ENCODE measurements at regions of chr4 and their contacts with region 1.

Region 1: GRCh38 chr4:184335520-184335919 is 117.8 kb upstream of the ENPP6 start:
- DNase-seq: no peak
- H3K4me3 ChIP-seq: no peak overlapping the region
- H3K27ac ChIP-seq: no peak overlapping the region
- H3K4me1 ChIP-seq: peaks cover 19% of the 10 kb centered on the region
- H3K27me3 ChIP-seq: no peaks in the 10 kb centered on the region
- CTCF ChIP-seq: no peak

Region 2: DNA sequence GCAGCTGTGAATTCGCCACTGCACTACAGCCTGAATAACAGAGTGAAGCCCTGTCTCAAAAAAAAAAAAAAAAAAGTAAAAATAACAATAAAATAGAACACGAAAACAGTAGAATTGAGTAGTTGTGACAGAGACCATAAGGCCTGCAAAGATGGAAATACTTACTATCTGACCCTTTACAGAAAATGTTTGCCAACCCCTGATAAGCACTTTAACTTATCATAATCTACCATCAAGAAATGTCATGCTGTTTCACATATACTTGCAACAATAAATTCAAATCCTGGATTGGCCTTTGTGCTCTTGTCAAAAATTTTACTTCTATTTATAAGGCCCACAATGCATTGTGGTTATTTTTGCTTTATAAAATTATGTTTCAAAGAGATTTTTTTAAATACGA is 755.1 kb before region 1 on chr4:
- CTCF ChIA-PET with region 1: no interaction called
- POLR2A ChIA-PET with region 1: no interaction called
- intact Hi-C with region 1: no loop called
- DNase-seq: no peak
- H3K4me3 ChIP-seq: no peak overlapping the region
- H3K27ac ChIP-seq: no peak overlapping the region
- H3K4me1 ChIP-seq: no peaks in the 10 kb centered on the region
- H3K27me3 ChIP-seq: no peaks in the 10 kb centered on the region
- CTCF ChIP-seq: no peak

Region 3: GRCh38 chr4:184424993-184425758 is 89.7 kb after region 1 on chr4:
- CTCF ChIA-PET with region 1: no interaction called
- POLR2A ChIA-PET with region 1: no interaction called
- intact Hi-C with region 1: no loop called
- DNase-seq: no peak
- H3K4me3 ChIP-seq: no peak overlapping the region
- H3K27ac ChIP-seq: no peak overlapping the region
- H3K4me1 ChIP-seq: peaks cover 9% of the 10 kb centered on the region; the same call in 1 of the 2 replicates
- H3K27me3 ChIP-seq: no peaks in the 10 kb centered on the region
- CTCF ChIP-seq: no peak

Region 4: DNA sequence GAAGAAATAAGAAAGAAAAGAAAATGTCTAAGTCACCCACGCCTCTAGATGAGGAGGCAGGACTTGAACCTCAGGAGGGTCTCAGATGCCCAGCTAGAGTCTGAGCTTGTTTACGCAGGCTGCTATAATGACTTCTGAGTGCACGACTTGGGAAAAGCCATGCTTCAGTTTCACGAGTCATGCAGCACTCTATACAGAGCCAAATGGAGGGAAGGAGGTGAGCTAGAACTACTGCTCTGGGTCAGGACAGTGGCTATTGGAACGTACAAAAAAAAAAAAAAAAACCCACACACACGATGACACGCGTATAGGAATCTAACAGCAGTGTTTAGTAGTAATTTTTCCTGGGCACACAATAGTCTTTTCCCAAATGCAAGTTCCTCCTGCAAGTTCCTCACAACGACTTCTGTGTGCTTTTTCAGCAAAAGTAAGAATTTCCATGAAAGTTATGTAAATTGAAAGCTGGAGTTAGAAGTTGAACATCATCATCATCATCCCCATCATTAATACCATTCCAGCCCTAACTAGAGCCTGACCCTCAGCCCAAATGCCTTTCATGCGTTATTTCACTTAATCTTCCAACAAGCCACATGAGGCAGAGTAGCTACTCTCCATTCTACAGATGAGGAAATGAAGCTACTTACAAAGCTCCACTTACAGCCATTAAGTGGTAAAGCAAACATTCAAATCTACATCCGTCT is 102.2 kb after region 1 on chr4:
- CTCF ChIA-PET with region 1: no interaction called
- POLR2A ChIA-PET with region 1: no interaction called
- intact Hi-C with region 1: no loop called
- DNase-seq: no peak
- H3K4me3 ChIP-seq: no peak overlapping the region
- H3K27ac ChIP-seq: no peak overlapping the region
- H3K4me1 ChIP-seq: no peaks in the 10 kb centered on the region
- H3K27me3 ChIP-seq: no peaks in the 10 kb centered on the region
- CTCF ChIP-seq: no peak

Region 5: DNA sequence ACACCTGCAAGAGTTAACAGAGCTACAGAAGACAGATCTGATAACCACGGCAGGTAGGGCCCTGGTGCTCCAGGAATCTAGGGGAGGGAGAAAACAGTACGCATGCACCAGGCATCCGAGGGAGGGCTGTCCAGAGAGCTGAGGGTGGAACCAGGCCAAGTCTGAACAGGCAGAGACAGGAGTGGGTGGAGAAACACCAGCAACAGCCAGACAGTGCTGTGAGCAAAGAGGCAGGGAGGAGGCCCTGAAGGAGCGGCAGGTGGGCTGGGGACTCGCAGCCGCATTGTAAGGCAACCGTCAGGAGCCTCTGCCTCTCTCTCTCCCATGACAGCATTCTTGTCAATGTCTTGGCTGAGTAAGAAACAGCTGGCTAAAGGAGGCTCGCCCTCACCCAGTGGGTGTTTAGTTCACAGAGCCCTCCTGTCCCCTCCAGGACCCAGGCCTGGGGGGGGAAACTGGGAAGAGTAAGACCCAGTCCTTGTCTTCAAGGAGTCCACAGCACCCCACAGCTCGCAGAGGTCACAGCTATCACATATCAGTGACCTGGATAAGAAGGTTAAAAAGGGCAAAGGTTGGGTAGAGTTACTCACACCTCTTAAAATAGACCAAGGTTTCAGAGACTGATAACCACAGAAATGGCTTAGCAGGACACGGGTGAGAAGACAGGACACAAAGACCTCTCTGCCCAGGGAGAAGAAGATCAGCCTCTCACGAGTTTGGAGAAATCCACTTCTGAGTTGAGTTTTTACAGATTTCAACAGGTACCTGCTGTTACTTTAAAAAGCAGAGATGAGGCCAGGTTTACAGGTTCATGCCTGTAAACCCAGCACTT is 479.7 kb after region 1 on chr4:
- CTCF ChIA-PET with region 1: no interaction called
- POLR2A ChIA-PET with region 1: no interaction called
- intact Hi-C with region 1: loop called (anchors 5 kb)
- DNase-seq: peak; percentile 87
- H3K4me3 ChIP-seq: peak overlapping the region; percentile 44
- H3K27ac ChIP-seq: peak overlapping the region; percentile 85
- H3K4me1 ChIP-seq: peaks cover 57% of the 10 kb centered on the region
- H3K27me3 ChIP-seq: no peaks in the 10 kb centered on the region
- CTCF ChIP-seq: no peak